Astrocyte of the cerebellum (primary cell): ENCODE measurements at regions of chr11 and their contacts with region 1.

Region 1: DNA sequence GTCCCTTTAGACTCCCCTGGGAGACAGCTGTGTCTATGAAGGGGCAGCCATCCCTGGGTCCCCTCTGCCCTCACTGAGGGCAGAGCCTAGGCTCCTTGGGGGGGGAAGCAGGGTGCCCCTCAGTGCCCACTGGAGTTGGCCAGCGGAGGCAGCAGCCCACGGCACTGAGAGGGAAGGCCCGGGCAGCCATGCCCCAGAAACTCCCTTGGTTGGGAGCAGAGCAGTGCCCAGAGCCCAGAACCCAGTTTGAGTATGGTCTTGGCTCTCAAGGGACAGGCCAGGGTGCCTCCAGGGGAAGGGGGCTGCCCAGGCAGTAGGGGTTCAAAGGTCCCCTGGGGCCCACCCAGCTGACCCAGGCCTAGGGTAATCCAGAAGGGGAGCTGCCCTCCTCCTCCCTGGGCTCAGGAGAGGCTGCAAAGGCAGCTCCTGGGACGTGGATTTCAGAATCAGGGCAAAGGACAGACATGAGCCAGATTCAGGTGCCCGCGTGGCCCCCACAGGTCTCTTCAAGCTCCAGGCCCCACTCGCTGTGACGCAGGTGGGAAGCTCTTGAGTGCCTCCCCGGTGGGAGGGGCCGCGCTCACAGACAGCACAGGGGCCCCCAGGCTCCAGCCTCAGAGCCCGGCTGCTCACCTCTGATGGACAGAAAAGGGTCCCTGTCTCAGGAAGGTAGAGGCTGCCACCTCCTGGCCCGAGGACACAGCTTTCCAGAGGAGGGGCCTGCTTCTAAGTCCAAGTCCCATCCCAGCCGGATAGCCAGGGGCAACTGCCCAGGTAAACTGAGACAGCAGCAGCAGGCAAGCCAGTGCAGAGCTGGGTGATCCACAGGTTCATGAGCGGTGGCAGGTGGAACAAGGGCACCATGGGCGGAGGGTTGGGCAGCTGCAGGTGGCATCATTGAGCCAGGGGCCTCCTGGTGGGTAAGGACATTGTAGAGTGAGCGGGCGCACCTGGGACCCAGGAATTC is 2.6 kb downstream of the C11orf21 start:
- DNase-seq: no peak
- H3K4me3 ChIP-seq: no peak overlapping the region
- CTCF ChIP-seq: peak; percentile 25

Region 2: GRCh38 chr11:2240834-2241233 is 58.2 kb before region 1 on chr11:
- in situ Hi-C with region 1: loop called (anchors 5 kb)
- DNase-seq: no peak
- H3K4me3 ChIP-seq: no peak overlapping the region
- CTCF ChIP-seq: no peak